ENCODE measurements at regions of chr2 and their contacts with region 1.

Region 1: GRCh38 chr2:32918774-32919173 is 28.0 kb upstream of the LTBP1 start:
- DNase-seq: no peak
- ATAC-seq: no peak
- H3K4me3 ChIP-seq: no peak overlapping the region
- H3K4me3 Mint-ChIP-seq: no peak overlapping the region
- H3K27ac ChIP-seq: no peak overlapping the region
- H3K27ac Mint-ChIP-seq: no peak overlapping the region
- H3K4me1 ChIP-seq: no peaks in the 10 kb centered on the region
- H3K4me1 Mint-ChIP-seq: no peaks in the 10 kb centered on the region
- H3K27me3 ChIP-seq: peaks cover 0 to 5% of the 10 kb centered on the region in 2 experiments
- H3K27me3 Mint-ChIP-seq: peaks cover 14 to 23% of the 10 kb centered on the region in 2 donors

Region 2: GRCh38 chr2:31110998-31111397 is 1807.8 kb before region 1 on chr2:
- CTCF ChIA-PET with region 1: no interaction called
- POLR2A ChIA-PET with region 1: interaction called in 1 of 2 experiments, 11 read pairs
- DNase-seq: no peak
- ATAC-seq: no peak
- H3K4me3 ChIP-seq: no peak overlapping the region
- H3K4me3 Mint-ChIP-seq: no peak overlapping the region
- H3K27ac ChIP-seq: no peak overlapping the region
- H3K27ac Mint-ChIP-seq: no peak overlapping the region
- H3K4me1 ChIP-seq: no peaks in the 10 kb centered on the region
- H3K4me1 Mint-ChIP-seq: no peaks in the 10 kb centered on the region
- H3K27me3 ChIP-seq: peaks cover 0 to 9% of the 10 kb centered on the region in 2 experiments
- H3K27me3 Mint-ChIP-seq: peaks cover 22 to 32% of the 10 kb centered on the region in 2 donors

Region 3: DNA sequence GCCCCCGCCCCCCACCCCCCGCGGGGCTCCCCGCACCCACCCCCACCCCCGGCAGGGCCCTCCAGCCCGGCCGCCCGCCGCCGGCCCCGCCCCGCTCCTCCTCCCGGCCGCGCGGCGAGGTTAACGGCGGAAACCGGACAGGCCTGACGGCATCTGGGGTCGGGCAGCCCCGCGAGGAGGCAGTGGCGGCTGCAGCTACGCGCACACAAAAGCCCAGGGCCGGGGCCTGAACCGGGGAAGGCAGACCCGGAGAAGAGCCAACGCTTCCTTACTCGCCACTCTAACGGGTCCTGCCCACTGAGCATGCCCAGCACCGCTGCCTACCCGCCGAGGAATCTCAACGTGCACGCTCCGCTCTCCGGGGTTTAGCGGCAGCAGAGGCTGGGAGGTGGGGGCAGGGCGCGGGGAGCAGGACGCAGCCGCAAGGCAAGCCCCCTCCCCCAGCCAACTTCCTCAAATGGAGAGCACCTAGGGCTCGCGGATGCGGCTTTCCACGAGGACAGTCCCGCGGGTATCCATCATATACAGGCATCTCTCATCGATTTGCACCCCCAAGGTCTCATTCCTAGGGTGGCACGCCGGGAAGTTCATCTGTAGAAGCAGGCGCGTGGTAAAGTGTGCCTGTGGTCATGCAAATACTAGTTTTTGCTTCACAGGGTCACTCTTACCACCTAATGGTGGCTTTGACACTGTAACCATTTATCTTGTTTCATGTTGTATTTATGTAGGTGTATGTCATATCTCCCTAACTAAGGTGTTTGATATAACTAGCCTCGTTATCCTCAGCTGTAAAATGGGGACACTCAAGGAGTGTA is 907.9 kb before region 1 on chr2 and contains the start of gene MEMO1:
- CTCF ChIA-PET with region 1: interaction called in 1 of 2 experiments, 11 read pairs
- POLR2A ChIA-PET with region 1: no interaction called
- DNase-seq: peak; percentile 83 to 95 (median 91)
- ATAC-seq: peak; percentile 72 to 78 (median 76)
- H3K4me3 ChIP-seq: peak within 1 kb of the TSS; percentile 66 to 79
- H3K4me3 Mint-ChIP-seq: peak within 1 kb of the TSS; percentile 83 to 90 (median 88)
- H3K27ac ChIP-seq: peak within 1 kb of the TSS; percentile 74
- H3K27ac Mint-ChIP-seq: peak within 1 kb of the TSS; percentile 94 to 95
- H3K4me1 ChIP-seq: peaks cover 8 to 27% of the 10 kb centered on the region in 2 experiments
- H3K4me1 Mint-ChIP-seq: peaks cover 39 to 49% (median 42%) of the 10 kb centered on the region in 3 donors
- H3K27me3 ChIP-seq: no peaks in the 10 kb centered on the region
- H3K27me3 Mint-ChIP-seq: no peaks in the 10 kb centered on the region
- total RNA-seq, gene MEMO1: 35.0 to 46.3 (median 41.5) TPM